ENCODE measurements at regions of chr10 and their contacts with region 1.

Region 1: GRCh38 chr10:59803714-59804113 is 50.5 kb upstream of the MRLN start:
- DNase-seq: no peak
- H3K4me3 Mint-ChIP-seq: no peak overlapping the region
- H3K27ac Mint-ChIP-seq: no peak overlapping the region
- H3K4me1 Mint-ChIP-seq: peaks cover 24% of the 10 kb centered on the region
- H3K27me3 Mint-ChIP-seq: no peaks in the 10 kb centered on the region
- CTCF ChIP-seq: no peak

Region 2: GRCh38 chr10:59057345-59057744 is 746.4 kb before region 1 on chr10:
- CTCF ChIA-PET with region 1: no interaction called
- intact Hi-C with region 1: no loop called
- DNase-seq: no peak
- H3K4me3 Mint-ChIP-seq: no peak overlapping the region
- H3K27ac Mint-ChIP-seq: no peak overlapping the region
- H3K4me1 Mint-ChIP-seq: no peaks in the 10 kb centered on the region
- H3K27me3 Mint-ChIP-seq: peaks cover 32% of the 10 kb centered on the region
- CTCF ChIP-seq: no peak

Region 3: GRCh38 chr10:59456199-59456598 is 347.5 kb before region 1 on chr10:
- CTCF ChIA-PET with region 1: no interaction called
- intact Hi-C with region 1: no loop called
- DNase-seq: no peak
- H3K4me3 Mint-ChIP-seq: no peak overlapping the region
- H3K27ac Mint-ChIP-seq: no peak overlapping the region
- H3K4me1 Mint-ChIP-seq: no peaks in the 10 kb centered on the region
- H3K27me3 Mint-ChIP-seq: peaks cover 28% of the 10 kb centered on the region
- CTCF ChIP-seq: no peak

Region 4: GRCh38 chr10:59633063-59633462 is 170.7 kb before region 1 on chr10:
- CTCF ChIA-PET with region 1: no interaction called
- intact Hi-C with region 1: no loop called
- DNase-seq: peak; percentile 8
- H3K4me3 Mint-ChIP-seq: no peak overlapping the region
- H3K27ac Mint-ChIP-seq: no peak overlapping the region
- H3K4me1 Mint-ChIP-seq: no peaks in the 10 kb centered on the region
- H3K27me3 Mint-ChIP-seq: peaks cover 61% of the 10 kb centered on the region
- CTCF ChIP-seq: no peak

Region 5: GRCh38 chr10:59719374-59719773 is 84.3 kb before region 1 on chr10:
- CTCF ChIA-PET with region 1: no interaction called
- intact Hi-C with region 1: loop called (anchors 5 kb)
- DNase-seq: no peak
- H3K4me3 Mint-ChIP-seq: no peak overlapping the region
- H3K27ac Mint-ChIP-seq: no peak overlapping the region
- H3K4me1 Mint-ChIP-seq: peaks cover 9% of the 10 kb centered on the region
- H3K27me3 Mint-ChIP-seq: peaks cover 35% of the 10 kb centered on the region
- CTCF ChIP-seq: no peak

Region 6: GRCh38 chr10:60098676-60099601 is 295.2 kb after region 1 on chr10:
- CTCF ChIA-PET with region 1: no interaction called
- intact Hi-C with region 1: no loop called
- DNase-seq: peak; percentile 57
- H3K4me3 Mint-ChIP-seq: no peak overlapping the region
- H3K27ac Mint-ChIP-seq: no peak overlapping the region
- H3K4me1 Mint-ChIP-seq: peaks cover 31% of the 10 kb centered on the region
- H3K27me3 Mint-ChIP-seq: no peaks in the 10 kb centered on the region
- CTCF ChIP-seq: peak; percentile 77

Measured in Calu3 (cell line).